Activated CD8-positive, alpha-beta T cell treated with anti-CD3 and anti-CD28 coated beads for 36 hours (primary cell): ENCODE measurements at regions of chr2 and their contacts with region 1.

Region 1: DNA sequence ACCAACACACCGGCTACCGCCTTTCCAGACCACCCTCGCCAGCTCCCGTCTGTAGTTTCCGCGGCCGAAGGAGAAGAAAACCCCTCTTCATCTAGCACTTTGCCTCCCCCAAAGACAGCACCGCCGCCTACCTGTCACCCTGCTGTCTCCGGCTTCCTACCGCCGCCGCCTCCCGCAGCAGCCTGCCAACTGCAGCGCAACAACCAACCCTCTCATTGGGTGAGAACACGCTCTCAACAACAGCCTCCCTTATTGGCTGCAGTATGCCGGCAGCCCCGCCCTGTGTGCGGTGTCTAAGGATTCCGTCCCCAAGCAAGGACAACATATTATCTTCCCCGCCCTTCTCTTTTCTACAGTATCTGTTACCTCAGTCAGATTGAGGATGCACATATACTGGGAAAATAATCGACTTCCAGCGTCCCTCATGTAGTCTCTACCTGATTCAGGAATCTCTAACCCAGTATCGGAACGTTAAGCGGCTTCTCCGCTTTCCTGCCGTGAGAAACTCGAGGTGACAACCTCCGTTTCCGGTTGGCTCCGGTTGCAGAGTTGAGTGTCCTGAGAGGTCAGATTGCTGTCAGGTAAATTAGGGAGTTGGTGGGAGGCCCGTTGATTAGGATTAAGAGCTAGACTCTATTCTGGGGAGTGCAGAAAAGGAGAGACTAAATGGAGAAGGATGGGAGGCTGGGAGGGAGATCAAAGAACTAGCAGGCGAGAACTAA is at the starts of genes HYCC2 and NDUFB3:
- DNase-seq: peak; percentile 95
- ATAC-seq: peak; percentile 97
- H3K4me3 Mint-ChIP-seq: peak within 1 kb of the TSS; percentile 90
- H3K27ac Mint-ChIP-seq: peak within 1 kb of the TSS; percentile 93
- H3K4me1 Mint-ChIP-seq: peaks cover 48% of the 10 kb centered on the region
- H3K27me3 Mint-ChIP-seq: no peaks in the 10 kb centered on the region
- CTCF ChIP-seq: no peak
- total RNA-seq, gene HYCC2: 24.7 to 26.9 TPM
- total RNA-seq, gene NDUFB3: 134 to 140 TPM

Region 2: GRCh38 chr2:200929334-200930249 is 142.0 kb before region 1 on chr2:
- CTCF ChIA-PET with region 1: interaction called, 11 read pairs
- POLR2A ChIA-PET with region 1: no interaction called
- intact Hi-C with region 1: no loop called
- DNase-seq: no peak
- ATAC-seq: peak; percentile 77
- H3K4me3 Mint-ChIP-seq: no peak overlapping the region
- H3K27ac Mint-ChIP-seq: peak overlapping the region; percentile 52
- H3K4me1 Mint-ChIP-seq: peaks cover 11% of the 10 kb centered on the region
- H3K27me3 Mint-ChIP-seq: no peaks in the 10 kb centered on the region
- CTCF ChIP-seq: no peak

Region 3: GRCh38 chr2:201057087-201057521 is 14.5 kb before region 1 on chr2:
- CTCF ChIA-PET with region 1: interaction called, 12 read pairs
- POLR2A ChIA-PET with region 1: interaction called, 4 read pairs
- intact Hi-C with region 1: no loop called
- DNase-seq: no peak
- ATAC-seq: no peak
- H3K4me3 Mint-ChIP-seq: no peak overlapping the region
- H3K27ac Mint-ChIP-seq: peak overlapping the region; percentile 48
- H3K4me1 Mint-ChIP-seq: peaks cover 37% of the 10 kb centered on the region
- H3K27me3 Mint-ChIP-seq: no peaks in the 10 kb centered on the region
- CTCF ChIP-seq: no peak

Region 4: DNA sequence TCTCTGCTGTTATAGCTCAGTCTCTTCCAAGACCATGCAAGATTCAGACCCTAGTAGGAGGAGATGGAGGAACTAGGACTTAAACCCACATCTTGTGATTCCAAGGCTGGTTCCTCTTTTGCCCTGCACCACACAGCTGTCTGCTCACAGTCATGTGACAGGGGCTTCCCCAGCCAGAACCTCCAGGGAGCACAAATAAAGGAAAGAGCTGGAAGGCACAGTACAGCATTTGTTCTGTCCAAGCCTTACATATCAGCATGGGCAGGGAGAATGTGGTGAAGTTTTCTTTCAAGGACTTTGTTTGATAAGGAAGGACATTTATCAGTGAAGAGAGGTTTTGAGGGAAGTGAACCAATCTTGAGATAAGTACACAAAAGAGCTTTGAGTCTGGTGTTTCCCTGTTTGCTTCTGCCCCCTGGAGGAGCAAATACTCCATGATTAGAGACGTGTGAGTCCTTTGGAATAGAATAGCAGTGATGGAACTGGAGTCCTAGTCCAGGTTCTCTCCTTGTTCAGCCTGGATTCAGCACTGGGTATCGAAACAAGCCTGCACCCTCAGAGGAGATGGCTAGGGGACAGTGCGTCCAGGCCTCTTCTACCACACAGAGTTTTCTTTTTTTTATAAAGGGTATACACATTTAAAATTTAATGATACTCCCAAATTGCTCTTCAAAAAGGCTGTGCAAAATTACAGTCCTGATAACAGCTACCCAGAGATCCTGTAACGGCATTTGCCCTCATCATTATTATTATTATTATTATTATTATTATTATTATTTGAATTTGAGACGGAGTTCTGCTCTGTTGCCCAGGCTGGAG is 86.7 kb after region 1 on chr2:
- CTCF ChIA-PET with region 1: interaction called, 12 read pairs
- POLR2A ChIA-PET with region 1: no interaction called
- intact Hi-C with region 1: no loop called
- DNase-seq: peak; percentile 64
- ATAC-seq: peak; percentile 81
- H3K4me3 Mint-ChIP-seq: no peak overlapping the region
- H3K27ac Mint-ChIP-seq: peak overlapping the region; percentile 85
- H3K4me1 Mint-ChIP-seq: peaks cover 24% of the 10 kb centered on the region
- H3K27me3 Mint-ChIP-seq: no peaks in the 10 kb centered on the region
- CTCF ChIP-seq: peak; percentile 65

Region 5: DNA sequence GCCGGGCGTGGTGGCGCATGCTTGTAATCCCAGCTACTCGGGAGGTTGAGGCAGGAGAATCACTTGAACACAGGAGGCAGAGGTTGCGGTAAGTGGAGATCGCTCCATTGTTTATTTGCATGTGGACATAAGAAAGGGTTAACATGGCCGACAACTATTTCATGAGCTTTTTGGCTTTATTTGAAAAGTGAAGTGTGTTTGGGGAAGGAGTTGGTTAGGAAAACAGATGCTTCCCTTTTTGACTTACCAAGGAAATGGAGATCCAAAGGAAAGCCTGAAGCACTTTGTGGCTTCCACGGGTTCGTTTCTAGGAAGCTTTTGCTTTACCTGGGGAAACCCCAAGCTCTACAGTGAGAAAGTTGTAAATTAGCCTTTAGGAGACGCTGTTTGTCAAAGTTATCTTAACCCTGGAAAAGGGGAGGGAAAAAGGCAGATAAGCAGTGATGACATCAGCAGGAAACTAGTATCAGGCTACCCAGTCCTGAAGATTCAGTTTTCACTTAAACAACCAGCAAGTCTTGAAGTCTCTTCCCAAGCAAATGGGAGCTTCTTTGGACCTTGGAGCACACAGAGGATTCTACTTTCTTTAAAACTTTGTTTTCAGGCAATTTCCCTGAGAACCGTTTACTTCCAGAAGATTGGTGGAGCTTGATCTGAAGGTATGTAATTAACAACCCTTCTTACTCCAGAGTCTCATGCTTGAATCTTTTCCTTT is 111.2 kb after region 1 on chr2 and contains the start of gene CASP10:
- CTCF ChIA-PET with region 1: interaction called, 24 read pairs
- POLR2A ChIA-PET with region 1: interaction called, 3 read pairs
- intact Hi-C with region 1: loop called (anchors 5 kb)
- DNase-seq: peak; percentile 28
- ATAC-seq: peak; percentile 74
- H3K4me3 Mint-ChIP-seq: peak within 1 kb of the TSS; percentile 98
- H3K27ac Mint-ChIP-seq: peak within 1 kb of the TSS; percentile 99
- H3K4me1 Mint-ChIP-seq: peaks cover 43% of the 10 kb centered on the region
- H3K27me3 Mint-ChIP-seq: no peaks in the 10 kb centered on the region
- CTCF ChIP-seq: peak; percentile 29
- total RNA-seq, gene CASP10: 18.3 to 22.6 TPM